Endothelial cell of umbilical vein (primary cell): ENCODE measurements at regions of chr15 and their contacts with region 1.

Region 1: GRCh38 chr15:59372352-59373211 is at the start of gene MYO1E:
- DNase-seq: peak; percentile 98
- H3K4me3 ChIP-seq: peak within 1 kb of the TSS; percentile 85 to 91 (median 88)
- H3K27ac ChIP-seq: peak within 1 kb of the TSS; percentile 82
- H3K4me1 ChIP-seq: peaks cover 27% of the 10 kb centered on the region
- H3K27me3 ChIP-seq: no peaks in the 10 kb centered on the region
- CTCF ChIP-seq: no peak
- POLR2A ChIP-seq: peak; percentile 97
- total RNA-seq, gene MYO1E: 218 and 231 TPM in 2 replicates

Region 2: DNA sequence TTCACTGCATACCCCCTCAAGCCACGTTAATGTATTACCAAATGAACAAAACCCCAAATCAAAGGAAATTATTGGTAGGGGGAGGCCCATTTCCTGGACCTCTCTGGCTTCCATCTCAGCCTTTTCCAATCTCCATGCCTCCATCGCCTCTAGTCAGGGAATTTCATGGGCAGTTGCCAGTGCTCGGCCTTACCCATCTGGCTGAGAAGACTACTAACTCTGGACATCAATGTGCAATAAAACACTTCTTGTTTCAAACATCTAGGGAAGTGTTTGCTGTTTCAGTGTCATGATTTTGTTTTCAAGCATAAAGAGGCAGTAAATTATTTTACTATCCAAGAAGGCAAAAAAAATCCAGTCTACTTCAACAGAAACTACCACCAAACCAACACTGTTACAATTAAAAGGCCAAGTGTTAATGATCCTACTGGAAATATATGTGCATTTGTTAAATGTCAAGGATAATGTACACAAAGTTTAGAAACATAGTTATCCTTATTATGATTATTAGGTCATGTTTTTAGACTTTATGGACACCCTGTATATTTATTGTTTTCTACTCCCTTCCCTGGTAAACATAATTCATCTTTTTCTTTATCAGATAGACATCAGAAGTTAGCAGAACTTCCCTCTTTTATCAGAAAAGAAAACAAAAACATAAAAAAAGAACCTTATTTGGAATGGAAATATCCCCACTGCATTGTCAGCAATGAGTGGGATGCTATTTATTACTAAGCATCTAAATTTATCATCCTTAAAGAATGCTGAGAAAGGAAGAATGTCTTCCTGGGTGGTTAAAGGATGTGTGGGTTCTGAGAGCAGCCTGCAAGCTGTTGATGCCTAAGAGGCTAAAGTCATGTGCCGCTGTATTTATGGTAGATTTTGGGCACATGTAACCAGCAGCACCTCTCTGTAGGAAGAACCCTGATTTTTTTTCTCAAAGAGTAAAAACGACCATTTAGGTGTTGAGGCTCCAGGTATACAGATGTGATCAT is 150.8 kb before region 1 on chr15:
- CTCF ChIA-PET with region 1: interaction called, 3 read pairs
- POLR2A ChIA-PET with region 1: interaction called, 3 read pairs
- dilution Hi-C with region 1: no loop called
- intact Hi-C with region 1: loop called (anchors 5 kb)
- DNase-seq: no peak
- H3K4me3 ChIP-seq: no peak overlapping the region
- H3K27ac ChIP-seq: peak overlapping the region; percentile 26
- H3K4me1 ChIP-seq: peaks cover 57% of the 10 kb centered on the region
- H3K27me3 ChIP-seq: no peaks in the 10 kb centered on the region
- CTCF ChIP-seq: no peak
- POLR2A ChIP-seq: no peak

Region 3: DNA sequence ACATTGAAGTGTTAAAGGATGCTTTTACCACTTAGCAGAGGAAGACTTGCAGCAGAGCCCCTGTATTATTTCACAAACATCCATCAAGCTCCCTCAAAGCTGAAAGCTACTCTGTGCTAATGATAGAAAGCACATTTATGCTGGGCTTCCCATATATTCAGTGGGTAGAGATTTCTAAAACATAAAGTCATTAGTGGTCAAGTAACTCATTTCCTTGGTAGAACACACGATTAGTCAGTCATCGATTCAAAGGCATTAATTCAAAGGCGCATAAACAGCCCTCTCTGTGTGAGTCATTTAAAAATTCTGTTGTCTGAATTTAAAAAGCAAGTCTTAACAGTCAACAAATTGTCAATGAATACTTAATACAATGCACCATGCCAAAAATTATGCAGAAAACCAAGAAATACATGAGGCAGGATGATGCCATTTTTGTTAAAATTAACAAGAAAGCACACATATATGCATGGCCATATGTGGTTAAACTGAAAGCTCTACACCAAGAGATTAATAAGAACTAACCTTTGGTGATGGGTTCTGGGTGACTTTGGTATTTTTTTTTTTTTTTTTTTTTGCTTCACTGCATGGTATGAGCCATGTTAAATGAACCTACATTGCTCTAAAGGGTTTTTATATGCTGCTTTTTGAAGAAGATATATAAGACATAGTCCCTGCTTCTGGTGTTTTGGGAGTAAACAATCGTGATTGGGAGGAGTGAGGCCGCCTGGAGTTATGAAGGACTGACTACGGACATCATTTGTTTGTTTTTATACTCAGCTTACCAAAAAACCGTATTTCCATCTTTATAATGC is 104.2 kb before region 1 on chr15:
- CTCF ChIA-PET with region 1: no interaction called
- POLR2A ChIA-PET with region 1: no interaction called
- dilution Hi-C with region 1: no loop called
- intact Hi-C with region 1: loop called (anchors 1 kb)
- DNase-seq: peak; percentile 54
- H3K4me3 ChIP-seq: no peak overlapping the region
- H3K27ac ChIP-seq: peak overlapping the region; percentile 19
- H3K4me1 ChIP-seq: peaks cover 16% of the 10 kb centered on the region
- H3K27me3 ChIP-seq: no peaks in the 10 kb centered on the region
- CTCF ChIP-seq: no peak
- POLR2A ChIP-seq: no peak

Region 4: DNA sequence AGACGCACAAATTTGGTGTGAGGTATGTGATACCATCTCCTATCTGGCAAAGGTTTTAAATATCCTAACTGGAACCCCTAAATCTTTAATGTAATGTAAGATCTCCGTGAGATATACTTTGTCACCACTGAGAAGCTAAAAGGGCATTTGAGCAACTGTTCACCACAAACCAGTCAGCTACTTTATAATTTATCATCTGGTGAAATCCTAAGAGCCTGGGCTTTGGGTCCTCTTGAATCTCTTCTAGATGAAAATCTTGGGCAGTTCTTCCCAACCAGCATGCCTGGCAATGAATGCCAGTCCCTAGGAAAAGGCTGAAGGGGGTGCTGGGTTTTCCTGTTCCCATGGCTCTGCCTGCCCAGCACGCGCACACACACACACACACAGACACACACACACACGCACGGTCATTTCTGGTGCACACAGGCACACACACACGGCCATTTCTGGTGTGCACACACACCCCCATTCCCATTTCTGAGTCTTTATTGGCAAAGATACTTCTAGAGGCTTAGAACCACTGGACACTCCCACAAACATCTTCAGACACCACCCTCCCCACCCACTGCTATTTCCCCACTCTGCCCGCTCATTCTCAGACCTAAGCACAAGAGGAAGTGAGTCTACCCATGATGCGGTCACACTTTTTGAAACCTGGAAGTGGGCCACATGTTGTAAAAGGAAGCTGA is 72.5 kb before region 1 on chr15:
- CTCF ChIA-PET with region 1: interaction called, 3 read pairs
- POLR2A ChIA-PET with region 1: interaction called, 10 read pairs
- dilution Hi-C with region 1: no loop called
- intact Hi-C with region 1: loop called (anchors 1 kb)
- DNase-seq: peak; percentile 94
- H3K4me3 ChIP-seq: peak overlapping the region in 1 of 3 experiments; percentile 28
- H3K27ac ChIP-seq: peak overlapping the region; percentile 78
- H3K4me1 ChIP-seq: peaks cover 54% of the 10 kb centered on the region
- H3K27me3 ChIP-seq: no peaks in the 10 kb centered on the region
- CTCF ChIP-seq: no peak
- POLR2A ChIP-seq: no peak

Region 5: DNA sequence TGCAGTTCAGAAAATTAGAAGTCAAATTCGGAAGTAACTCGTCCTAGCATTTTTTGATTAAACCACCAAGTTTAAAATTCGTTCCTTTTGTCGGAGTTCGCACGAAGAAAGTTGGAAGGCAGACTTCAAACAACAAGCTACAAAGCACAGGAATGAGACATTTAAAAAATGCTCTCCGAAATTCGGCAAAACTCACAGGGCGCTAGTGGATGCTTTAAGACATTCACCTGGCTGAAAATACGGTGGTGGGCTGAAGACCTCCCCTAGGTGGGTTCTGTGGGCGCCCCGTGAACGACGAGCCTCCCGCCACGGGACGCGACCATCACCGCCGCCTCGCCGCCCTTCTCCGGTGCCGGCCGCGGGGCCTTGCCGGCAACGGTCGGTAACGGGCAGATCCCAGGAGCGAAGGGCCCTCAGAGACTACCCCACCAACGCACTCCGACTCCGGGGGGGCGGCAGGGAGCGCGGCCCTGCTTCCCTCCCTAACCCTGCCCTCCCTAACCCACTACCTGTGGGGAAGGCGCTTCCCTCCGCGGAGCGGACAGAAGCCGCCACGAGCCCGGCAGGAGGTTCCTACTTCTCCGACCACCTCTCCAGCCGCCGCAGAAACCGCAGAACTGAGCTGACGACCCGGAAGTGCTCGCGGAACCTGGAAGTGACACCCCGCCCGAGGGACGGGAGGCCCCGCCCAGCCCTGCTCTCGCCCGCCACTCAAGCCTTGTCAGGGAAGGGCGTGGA is 284.5 kb after region 1 on chr15 and contains the start of gene GTF2A2:
- CTCF ChIA-PET with region 1: no interaction called
- POLR2A ChIA-PET with region 1: no interaction called
- dilution Hi-C with region 1: no loop called
- intact Hi-C with region 1: loop called (anchors 5 kb)
- DNase-seq: peak; percentile 95
- H3K4me3 ChIP-seq: peak within 1 kb of the TSS; percentile 52 to 98 (median 90)
- H3K27ac ChIP-seq: peak within 1 kb of the TSS; percentile 57
- H3K4me1 ChIP-seq: peaks cover 14% of the 10 kb centered on the region
- H3K27me3 ChIP-seq: no peaks in the 10 kb centered on the region
- CTCF ChIP-seq: no peak
- POLR2A ChIP-seq: peak; percentile 96
- total RNA-seq, gene GTF2A2: 128 and 139 TPM in 2 replicates